H1 (cell line): ENCODE measurements at regions of chr20 and their contacts with region 1.

Region 1: GRCh38 chr20:740141-740540 is 28.2 kb downstream of the SLC52A3 start:
- DNase-seq: no peak
- H3K4me3 ChIP-seq: no peak overlapping the region
- H3K27ac ChIP-seq: no peak overlapping the region
- H3K4me1 ChIP-seq: peaks cover 0 to 1% (median 0%) of the 10 kb centered on the region in 4 experiments; a peak in 1 of 7 replicates
- H3K27me3 ChIP-seq: 0 out of 7 replicates have a peak, but pooled peaks cover 0 to 2% (median 0%) of the 10 kb centered on the region in 4 experiments
- CTCF ChIP-seq: no peak
- EP300 ChIP-seq: no peak
- POLR2A ChIP-seq: no peak
- RAD21 ChIP-seq: no peak

Region 2: DNA sequence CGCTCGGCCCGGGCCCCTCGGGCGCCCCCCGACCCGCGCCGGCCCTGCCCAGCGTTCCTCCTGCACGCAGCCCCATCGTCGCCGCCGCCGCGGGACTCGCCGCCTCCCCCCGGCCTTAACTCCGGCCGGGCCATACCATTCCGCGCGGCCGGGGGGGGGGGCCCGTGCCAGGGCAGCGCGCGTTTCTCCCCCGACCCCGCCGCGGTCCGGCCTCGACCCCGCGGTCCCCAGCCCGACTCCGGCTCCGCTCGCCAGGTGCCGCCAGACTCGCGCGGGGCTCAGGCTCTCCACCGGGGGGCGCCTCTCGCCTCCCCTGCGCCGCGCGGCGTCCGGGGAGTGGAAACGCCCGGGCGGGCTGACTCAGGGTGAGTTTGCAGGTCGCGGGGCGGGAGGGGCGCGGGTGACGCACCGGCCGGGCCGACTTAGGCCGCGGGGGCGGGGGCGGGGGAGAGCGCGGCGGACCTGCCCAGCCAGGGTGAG is 87.0 kb before region 1 on chr20 and contains the start of gene SRXN1:
- CTCF ChIA-PET with region 1: interaction called, 16 read pairs
- POLR2A ChIA-PET with region 1: interaction called, 4 read pairs
- DNase-seq: peak; percentile 58 to 90
- H3K4me3 ChIP-seq: peak within 1 kb of the TSS; percentile 37 to 72 (median 68)
- H3K27ac ChIP-seq: no peak within 1 kb of the TSS
- H3K4me1 ChIP-seq: peaks cover 12 to 21% (median 15%) of the 10 kb centered on the region in 4 experiments
- H3K27me3 ChIP-seq: peaks cover 0 to 7% (median 0%) of the 10 kb centered on the region in 4 experiments; a peak in 3 of 7 replicates
- CTCF ChIP-seq: peak; percentile 67 to 99 (median 78)
- EP300 ChIP-seq: peak in 1 of 2 experiments; percentile 75; a peak in 1 of 3 replicates
- POLR2A ChIP-seq: no peak
- RAD21 ChIP-seq: peak; percentile 63 to 82
- total RNA-seq, gene SRXN1: 15.8 and 16.7 TPM in 2 replicates

Region 3: GRCh38 chr20:688809-689212 is 51.3 kb before region 1 on chr20:
- CTCF ChIA-PET with region 1: interaction called, 12 read pairs
- POLR2A ChIA-PET with region 1: no interaction called
- DNase-seq: no peak
- H3K4me3 ChIP-seq: no peak overlapping the region
- H3K27ac ChIP-seq: no peak overlapping the region
- H3K4me1 ChIP-seq: peaks cover 0 to 12% (median 7%) of the 10 kb centered on the region in 4 experiments; a peak in 4 of 7 replicates
- H3K27me3 ChIP-seq: no peaks in the 10 kb centered on the region
- CTCF ChIP-seq: peak; percentile 14 to 46 (median 44); a peak in 3 of 4 replicates
- EP300 ChIP-seq: no peak
- POLR2A ChIP-seq: no peak
- RAD21 ChIP-seq: peak; percentile 17 to 45; a peak in 2 of 4 replicates

Region 4: GRCh38 chr20:750801-751200 is 10.7 kb after region 1 on chr20:
- CTCF ChIA-PET with region 1: interaction called, 25 read pairs
- POLR2A ChIA-PET with region 1: no interaction called
- DNase-seq: no peak
- H3K4me3 ChIP-seq: no peak overlapping the region
- H3K27ac ChIP-seq: no peak overlapping the region
- H3K4me1 ChIP-seq: no peaks in the 10 kb centered on the region; a peak in 1 of 7 replicates
- H3K27me3 ChIP-seq: no peaks in the 10 kb centered on the region
- CTCF ChIP-seq: no peak
- EP300 ChIP-seq: no peak
- POLR2A ChIP-seq: no peak
- RAD21 ChIP-seq: no peak

Region 5: DNA sequence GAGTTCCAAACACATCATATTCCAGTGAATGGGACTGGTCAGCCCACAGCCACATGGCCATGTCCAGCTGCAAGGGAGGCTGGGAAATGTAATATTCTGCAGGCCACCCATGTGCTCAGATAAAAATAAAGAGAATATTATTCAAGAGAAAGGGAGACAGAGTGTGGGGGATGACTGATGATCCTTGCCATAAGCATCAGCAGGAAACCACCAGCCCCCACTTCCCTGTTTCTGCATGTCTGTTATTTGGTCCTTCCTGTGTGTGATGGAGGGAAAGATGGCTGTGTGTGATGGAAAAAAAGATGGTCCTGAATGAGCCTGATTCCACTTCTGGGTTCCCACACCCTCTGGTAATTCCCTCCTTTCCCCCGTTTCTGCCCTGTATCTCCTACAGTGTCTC is 275.0 kb after region 1 on chr20:
- CTCF ChIA-PET with region 1: no interaction called
- POLR2A ChIA-PET with region 1: no interaction called
- DNase-seq: no peak
- H3K4me3 ChIP-seq: no peak overlapping the region
- H3K27ac ChIP-seq: no peak overlapping the region
- H3K4me1 ChIP-seq: no peaks in the 10 kb centered on the region
- H3K27me3 ChIP-seq: no peaks in the 10 kb centered on the region
- CTCF ChIP-seq: no peak
- EP300 ChIP-seq: no peak
- POLR2A ChIP-seq: no peak
- RAD21 ChIP-seq: no peak